ENCODE measurements at regions of chr13 and their contacts with region 1.

Region 1: GRCh38 chr13:43786773-43787517 is at the start of gene ENOX1:
- DNase-seq: peak; percentile 45 to 83 (median 56)
- ATAC-seq: peak; percentile 57 to 79 (median 76)
- H3K4me3 ChIP-seq: peak within 1 kb of the TSS; percentile 19 to 69 (median 51)
- H3K27ac ChIP-seq: peak within 1 kb of the TSS; percentile 25 to 59 (median 34)
- H3K4me1 ChIP-seq: peaks cover 0 to 4% (median 0%) of the 10 kb centered on the region in 3 donors
- H3K27me3 ChIP-seq: peaks cover 0 to 9% (median 0%) of the 10 kb centered on the region in 4 donors
- CTCF ChIP-seq: no peak
- total RNA-seq, gene ENOX1: 0.42 to 2.0 (median 1.1) TPM

Region 2: GRCh38 chr13:43303033-43303729 is 483.8 kb before region 1 on chr13:
- intact Hi-C with region 1: loop called in 1 of 3 experiments (anchors 10 kb)
- DNase-seq: peak; percentile 59 to 83 (median 71)
- ATAC-seq: peak; percentile 93 to 96 (median 94)
- H3K4me3 ChIP-seq: no peak overlapping the region
- H3K27ac ChIP-seq: no peak overlapping the region
- H3K4me1 ChIP-seq: peaks cover 0 to 8% (median 6%) of the 10 kb centered on the region in 3 donors
- H3K27me3 ChIP-seq: no peaks in the 10 kb centered on the region
- CTCF ChIP-seq: peak; percentile 16 to 63 (median 47)

Measured in pancreas (tissue), 10 donors.